ENCODE measurements at regions of chr14 and their contacts with region 1.

Region 1: DNA sequence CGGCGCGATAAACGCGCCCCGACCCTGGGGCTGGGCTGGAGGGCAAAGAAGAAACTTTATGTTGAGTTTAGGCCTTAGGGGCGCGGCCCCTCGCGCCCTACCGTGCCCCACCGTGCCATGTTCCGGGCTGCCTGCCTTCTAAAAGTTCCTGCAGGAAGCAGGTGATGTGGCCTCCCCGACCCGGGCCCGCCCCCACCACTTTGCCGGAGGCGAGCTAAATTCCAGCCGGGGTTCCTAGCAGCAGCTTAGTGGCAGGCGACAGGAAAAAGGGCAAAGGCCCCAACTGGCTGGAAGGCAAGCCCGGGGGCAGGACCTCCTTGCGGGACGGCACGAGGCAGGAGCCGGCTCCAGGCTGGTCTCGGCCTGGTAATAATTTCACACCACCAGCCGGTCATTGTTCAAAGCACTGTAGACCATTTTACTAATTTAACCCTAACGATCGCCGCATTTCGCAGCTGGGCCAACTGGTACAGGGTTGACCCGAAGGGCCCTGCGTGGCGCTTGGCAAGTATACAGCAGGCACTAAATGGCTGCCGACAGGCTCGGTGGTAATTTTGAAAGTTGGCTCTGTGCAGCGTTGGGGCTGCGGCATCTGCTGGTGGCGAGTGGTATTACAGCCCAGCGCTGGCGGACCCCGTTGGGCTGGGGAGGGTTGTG is 895 bp upstream of the CCDC88C start:
- DNase-seq: peak; percentile 56
- CTCF ChIP-seq: peak; percentile 91

Region 2: DNA sequence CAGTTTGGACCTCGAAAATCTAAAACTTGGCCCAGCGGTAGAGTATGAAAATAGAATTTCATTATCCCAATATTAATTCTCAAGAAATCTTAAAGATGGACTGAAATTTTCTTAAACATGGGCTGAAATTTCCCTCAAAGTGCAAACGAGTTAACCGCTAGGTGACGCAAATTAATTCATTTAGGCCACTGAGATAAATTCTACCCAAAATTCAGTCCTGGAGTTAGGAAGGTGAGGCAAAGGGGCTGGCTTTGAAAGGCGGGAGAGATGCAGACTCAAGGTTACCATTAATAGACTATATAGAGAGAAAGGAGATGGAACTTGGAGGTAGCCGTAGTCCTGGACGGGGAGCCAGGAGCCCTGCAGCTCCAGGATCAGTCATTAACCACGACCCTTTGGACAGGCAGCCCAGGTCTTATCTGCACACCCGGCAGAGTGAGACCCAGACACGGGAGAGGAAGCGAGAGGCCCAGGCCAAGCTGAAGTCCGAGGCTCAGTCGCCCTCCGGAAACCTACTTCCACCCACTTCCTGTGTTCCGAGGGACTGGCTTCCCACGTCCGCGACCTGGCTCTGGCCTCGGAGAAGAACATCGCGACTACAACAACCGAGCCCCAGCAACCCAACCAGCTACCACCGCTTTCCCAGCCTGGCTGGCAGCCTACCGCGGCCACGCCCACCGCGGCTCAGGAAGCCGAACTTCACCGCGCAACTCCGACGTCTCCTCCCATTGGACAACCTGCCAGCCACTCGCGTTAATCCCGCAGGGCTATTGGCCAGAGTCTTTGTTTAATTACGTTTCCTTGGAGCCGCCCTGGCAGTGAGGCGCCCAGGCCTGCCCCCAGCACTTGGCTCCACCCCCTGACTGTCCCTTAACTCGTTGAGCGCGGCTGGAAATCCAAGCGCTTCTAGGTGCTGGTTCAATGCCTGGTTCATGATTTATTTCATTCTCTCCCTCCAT is 1464.2 kb before region 1 on chr14 and contains the start of gene EFCAB11:
- CTCF ChIA-PET with region 1: no interaction called
- POLR2A ChIA-PET with region 1: no interaction called
- DNase-seq: peak; percentile 93
- CTCF ChIP-seq: peak; percentile 12

Region 3: DNA sequence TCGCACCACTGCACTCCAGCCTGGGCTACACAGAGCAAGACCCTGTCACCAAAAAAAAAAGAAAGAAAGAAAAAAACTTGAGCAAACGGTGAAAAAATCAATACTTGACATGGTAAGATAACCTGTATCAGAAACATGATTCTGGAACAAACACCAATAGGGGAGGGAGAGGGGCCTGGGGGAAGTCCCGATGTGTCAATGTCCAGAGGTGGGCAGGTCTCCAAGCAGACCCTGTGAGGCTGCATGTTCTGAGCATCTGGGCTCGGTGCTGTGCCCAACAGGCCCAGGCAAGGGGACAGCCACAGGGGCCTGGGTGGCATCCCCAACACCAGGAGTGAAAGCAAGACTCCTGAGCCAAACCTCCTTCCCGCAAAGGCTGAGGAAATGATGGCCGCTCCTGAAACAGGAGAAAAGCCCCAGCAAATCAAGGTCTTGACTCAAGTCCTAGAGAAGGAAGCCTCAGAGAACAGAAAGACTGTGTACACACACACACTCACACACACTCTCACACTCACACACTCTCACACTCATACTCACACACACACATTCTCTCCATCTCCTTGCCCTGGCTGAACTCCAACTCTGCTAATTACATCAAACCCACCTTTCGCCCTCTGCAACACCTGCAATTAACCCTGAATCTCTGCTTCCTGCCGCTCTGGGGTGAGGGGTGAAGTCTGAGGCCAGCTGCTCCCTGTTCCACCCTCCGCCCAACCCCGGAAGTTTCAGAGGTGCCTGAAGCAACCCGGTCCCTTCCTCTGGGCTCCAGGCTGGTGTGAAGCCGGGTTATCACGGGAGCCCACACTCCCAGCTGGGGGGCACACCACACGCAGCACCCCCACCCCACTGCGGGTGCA is 21.3 kb before region 1 on chr14:
- CTCF ChIA-PET with region 1: interaction called, 15 read pairs
- POLR2A ChIA-PET with region 1: interaction called, 10 read pairs
- DNase-seq: peak; percentile 76
- CTCF ChIP-seq: no peak

Region 4: GRCh38 chr14:91402771-91403600 is 15.5 kb before region 1 on chr14:
- CTCF ChIA-PET with region 1: interaction called, 15 read pairs
- POLR2A ChIA-PET with region 1: interaction called, 10 read pairs
- DNase-seq: no peak
- CTCF ChIP-seq: no peak

Measured in GM10248 (cell line).